ENCODE measurements at regions of chr16 and their contacts with region 1.

Region 1: DNA sequence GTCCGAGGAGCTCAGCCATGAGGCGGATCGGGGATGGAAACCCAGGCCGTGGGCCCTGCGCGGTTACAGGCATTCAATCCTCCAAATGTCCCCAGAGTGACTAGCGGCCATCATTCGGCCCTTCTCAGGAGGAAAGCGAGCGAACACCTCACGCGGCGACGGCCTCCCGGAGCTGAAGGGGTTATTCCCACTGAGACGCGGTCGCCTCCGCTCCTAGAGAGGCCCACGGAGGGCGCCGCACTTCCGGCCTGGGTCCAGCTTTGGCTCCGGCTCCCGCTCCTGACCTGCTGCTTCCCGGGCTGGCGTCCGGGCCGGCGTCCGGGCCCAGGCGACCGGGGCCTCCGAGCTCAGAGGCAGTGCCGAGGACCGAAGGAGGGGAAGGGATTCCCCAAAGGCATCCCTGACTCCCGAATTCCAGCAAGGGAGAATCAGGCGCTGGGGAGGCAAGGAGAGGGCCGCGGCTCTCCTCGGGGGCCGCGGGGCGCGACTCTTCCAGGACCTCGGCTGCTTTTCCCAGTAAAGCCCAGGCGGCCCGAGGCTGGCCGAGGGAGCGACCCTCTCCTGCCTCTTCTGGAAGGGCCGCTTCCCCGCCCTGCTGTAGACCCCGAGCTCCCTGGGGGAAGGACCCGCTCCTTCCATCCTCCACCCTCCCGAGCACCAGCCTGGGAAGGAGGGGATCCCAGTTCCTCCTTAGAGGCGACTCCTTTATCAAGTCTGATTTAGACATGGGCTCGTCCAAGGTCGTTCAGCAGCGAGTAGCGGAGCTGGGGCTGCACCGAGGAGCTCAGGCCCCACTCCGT is 18.6 kb upstream of the ZNF629 start:
- DNase-seq: peak; percentile 78
- ATAC-seq: peak; percentile 88
- H3K4me3 ChIP-seq: peak overlapping the region; percentile 74 to 96 (median 89)
- H3K27ac ChIP-seq: peak overlapping the region; percentile 92
- H3K4me1 ChIP-seq: peaks cover 54% of the 10 kb centered on the region
- H3K27me3 ChIP-seq: no peaks in the 10 kb centered on the region; a peak in 1 of 5 replicates
- CTCF ChIP-seq: peak; percentile 65
- EP300 ChIP-seq: peak; percentile 68 to 78; a peak in 3 of 4 replicates
- POLR2A ChIP-seq: peak; percentile 91 to 93
- RAD21 ChIP-seq: peak; percentile 83; the same call in 1 of the 2 replicates

Region 2: DNA sequence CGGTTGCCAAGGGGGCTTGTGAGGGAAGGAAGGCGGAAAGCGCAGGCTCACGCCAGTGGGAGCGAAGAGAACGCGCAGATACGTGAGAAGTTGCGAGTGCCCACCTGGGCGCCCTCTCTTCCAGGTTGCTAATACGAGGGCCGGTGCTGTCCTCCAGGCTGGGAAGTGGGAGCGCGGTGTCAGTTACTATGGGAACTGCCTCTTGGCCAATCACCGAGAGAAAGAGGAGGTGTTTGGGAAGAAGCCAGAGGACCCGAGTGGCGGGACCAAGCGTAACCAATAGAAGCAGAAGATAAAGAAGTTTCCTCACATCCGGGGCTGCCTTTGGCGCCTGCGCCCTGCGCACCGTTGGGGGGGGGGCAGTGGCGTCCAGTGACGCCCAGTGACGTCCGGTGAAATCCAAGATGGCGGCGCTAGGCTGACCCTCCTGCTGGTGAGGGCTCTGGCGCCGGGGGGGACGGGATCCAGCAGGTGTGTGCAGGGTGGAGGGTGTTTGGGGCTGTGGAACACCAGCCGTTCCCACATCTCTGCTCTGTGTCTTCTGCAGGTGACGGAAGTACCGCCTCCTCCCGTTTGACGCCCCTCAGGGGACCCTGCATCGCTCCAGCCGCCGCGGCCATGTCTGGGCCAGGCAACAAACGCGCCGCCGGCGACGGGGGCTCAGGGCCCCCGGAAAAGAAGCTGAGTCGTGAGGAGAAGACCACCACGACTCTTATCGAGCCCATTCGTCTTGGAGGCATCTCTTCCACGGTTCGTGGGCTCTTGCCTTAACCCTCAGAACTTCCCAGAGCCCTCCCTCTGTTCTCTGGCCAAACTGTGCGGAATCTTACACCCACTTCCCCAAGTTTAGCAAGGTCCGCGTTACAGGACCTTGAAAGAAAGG is 43.4 kb before region 1 on chr16 and contains the starts of genes CFAP119 and RNF40:
- CTCF ChIA-PET with region 1: no interaction called
- POLR2A ChIA-PET with region 1: no interaction called
- in situ Hi-C with region 1: no loop called
- intact Hi-C with region 1: no loop called
- DNase-seq: peak; percentile 99
- ATAC-seq: peak; percentile 93
- H3K4me3 ChIP-seq: peak within 1 kb of the TSS; percentile 80 to 91 (median 86)
- H3K27ac ChIP-seq: peak within 1 kb of the TSS; percentile 66
- H3K4me1 ChIP-seq: peaks cover 29% of the 10 kb centered on the region
- H3K27me3 ChIP-seq: no peaks in the 10 kb centered on the region; a peak in 1 of 5 replicates
- CTCF ChIP-seq: no peak
- EP300 ChIP-seq: no peak; a peak in 1 of 4 replicates
- POLR2A ChIP-seq: peak; percentile 76 to 88
- RAD21 ChIP-seq: peak; percentile 24; the same call in 1 of the 2 replicates
- total RNA-seq, gene CFAP119: 1.2 and 6.4 TPM in 2 replicates
- total RNA-seq, gene RNF40: 85.6 and 102 TPM in 2 replicates

Region 3: GRCh38 chr16:30775392-30776188 is 30.0 kb before region 1 on chr16:
- CTCF ChIA-PET with region 1: no interaction called
- POLR2A ChIA-PET with region 1: interaction called, 34 read pairs
- in situ Hi-C with region 1: no loop called
- intact Hi-C with region 1: loop called (anchors 5 kb)
- DNase-seq: peak; percentile 83
- ATAC-seq: peak; percentile 84
- H3K4me3 ChIP-seq: peak overlapping the region; percentile 63 to 88 (median 75)
- H3K27ac ChIP-seq: peak overlapping the region; percentile 89
- H3K4me1 ChIP-seq: peaks cover 36% of the 10 kb centered on the region
- H3K27me3 ChIP-seq: no peaks in the 10 kb centered on the region; a peak in 1 of 5 replicates
- CTCF ChIP-seq: peak; percentile 34
- EP300 ChIP-seq: peak; percentile 6 to 39; a peak in 1 of 4 replicates
- POLR2A ChIP-seq: peak; percentile 83 to 86
- RAD21 ChIP-seq: peak; percentile 44

Region 4: DNA sequence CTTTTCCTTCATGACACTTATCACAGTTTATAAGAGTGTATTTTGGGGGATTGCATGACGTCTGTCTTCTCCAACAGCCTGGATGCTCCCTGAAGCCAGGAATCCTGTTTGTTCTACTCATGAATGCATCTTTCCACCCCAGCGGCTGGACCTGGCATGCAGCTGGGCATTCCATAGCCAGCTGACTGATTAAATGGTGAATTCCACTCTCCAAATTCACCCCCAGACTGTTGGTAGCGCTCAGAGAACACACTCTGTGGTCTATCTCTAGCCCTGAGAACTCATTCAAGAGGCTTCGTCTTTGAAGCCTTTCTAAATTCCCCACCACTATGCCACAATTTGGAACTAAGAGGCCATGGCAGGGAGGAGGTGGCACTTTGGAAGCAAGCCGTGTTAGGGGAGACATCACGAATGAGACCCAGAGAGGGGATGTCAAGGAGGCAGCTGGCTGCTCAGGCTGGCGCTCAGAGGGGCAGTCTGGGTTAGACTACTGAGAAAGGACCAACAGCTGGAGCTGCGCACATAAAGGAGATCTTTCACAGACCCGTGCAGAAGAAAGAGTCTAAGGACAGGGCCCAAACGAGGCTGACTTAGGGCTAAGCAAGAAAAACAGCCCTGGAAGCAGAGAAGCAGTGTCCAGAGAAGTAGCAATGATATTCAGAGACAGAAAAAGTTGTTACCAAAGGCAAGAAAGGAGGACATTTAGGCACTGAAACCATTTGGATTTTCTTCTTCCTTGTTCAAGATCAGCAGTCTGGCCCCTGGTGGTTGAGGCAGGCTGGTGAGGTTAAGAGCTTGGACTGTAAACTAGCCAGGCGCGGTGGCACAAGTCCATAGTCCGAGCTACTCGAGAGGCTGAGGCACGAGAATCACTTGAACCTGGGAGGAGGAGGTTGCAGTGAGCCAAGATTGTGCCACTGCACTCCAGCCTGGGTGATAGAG is 23.8 kb after region 1 on chr16:
- CTCF ChIA-PET with region 1: no interaction called
- POLR2A ChIA-PET with region 1: interaction called, 12 read pairs
- in situ Hi-C with region 1: no loop called
- intact Hi-C with region 1: no loop called
- DNase-seq: peak; percentile 68
- ATAC-seq: peak; percentile 84
- H3K4me3 ChIP-seq: peak overlapping the region; percentile 2 to 48 (median 19); a peak in 3 of 6 replicates
- H3K27ac ChIP-seq: peak overlapping the region; percentile 33
- H3K4me1 ChIP-seq: peaks cover 50% of the 10 kb centered on the region
- H3K27me3 ChIP-seq: no peaks in the 10 kb centered on the region
- CTCF ChIP-seq: peak; percentile 61
- EP300 ChIP-seq: no peak
- POLR2A ChIP-seq: no peak
- RAD21 ChIP-seq: no peak

Region 5: DNA sequence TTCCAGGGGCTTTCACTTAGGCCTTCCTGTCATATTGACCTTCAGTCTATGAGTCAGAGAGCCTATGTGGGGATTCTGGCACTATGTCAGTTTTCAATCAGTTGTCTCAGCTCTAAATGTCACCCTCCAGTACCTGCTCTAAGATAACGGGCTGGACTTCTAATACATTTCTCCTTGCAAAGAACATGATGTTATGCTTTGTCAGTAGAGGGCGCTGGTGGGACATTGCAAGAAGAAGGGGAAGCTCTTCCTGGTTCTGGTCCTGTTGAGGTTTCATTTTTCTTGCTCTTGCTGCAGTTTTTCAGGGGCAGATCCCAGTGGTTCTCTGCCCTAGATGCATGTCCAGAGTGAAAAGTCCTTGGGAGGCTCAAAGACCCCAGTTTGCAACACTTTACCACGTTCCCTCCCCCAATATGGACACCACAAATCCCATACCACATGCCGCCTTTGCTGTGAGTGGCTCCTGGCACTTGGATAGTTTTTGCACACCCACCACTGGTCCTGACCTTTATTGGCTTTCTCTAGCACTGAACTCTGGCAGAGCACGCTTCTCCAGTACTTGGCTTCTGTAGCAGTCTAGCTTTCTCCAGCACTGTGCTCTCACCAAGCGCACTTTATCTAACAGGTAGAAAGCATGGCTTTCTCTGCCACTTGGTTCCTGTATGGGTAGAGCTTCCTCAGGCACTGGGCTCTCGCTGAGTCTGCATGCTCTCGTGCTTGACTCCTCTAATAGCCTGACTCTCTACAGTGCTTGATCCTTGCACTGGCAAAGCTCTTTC is 39.3 kb after region 1 on chr16:
- CTCF ChIA-PET with region 1: interaction called, 3 read pairs
- POLR2A ChIA-PET with region 1: interaction called, 24 read pairs
- in situ Hi-C with region 1: no loop called
- intact Hi-C with region 1: no loop called
- DNase-seq: peak; percentile 97
- ATAC-seq: peak; percentile 86
- H3K4me3 ChIP-seq: peak overlapping the region; percentile 32 to 66 (median 45)
- H3K27ac ChIP-seq: peak overlapping the region; percentile 64
- H3K4me1 ChIP-seq: peaks cover 33% of the 10 kb centered on the region
- H3K27me3 ChIP-seq: no peaks in the 10 kb centered on the region
- CTCF ChIP-seq: peak; percentile 96
- EP300 ChIP-seq: no peak; a peak in 1 of 4 replicates
- POLR2A ChIP-seq: peak; percentile 23 to 44; a peak in 3 of 4 replicates
- RAD21 ChIP-seq: peak; percentile 89

Measured in HepG2 (cell line).